ENCODE measurements at regions of chr10 and their contacts with region 1.

Region 1: GRCh38 chr10:68550747-68551411 is 9.3 kb upstream of the TET1 start:
- DNase-seq: peak in 1 of 2 donors; percentile 35
- ATAC-seq: peak; percentile 88 to 89
- H3K4me3 ChIP-seq: no peak overlapping the region
- H3K27ac ChIP-seq: no peak overlapping the region
- H3K4me1 ChIP-seq: no peaks in the 10 kb centered on the region
- H3K27me3 ChIP-seq: no peaks in the 10 kb centered on the region
- CTCF ChIP-seq: peak in 4 of 5 experiments; percentile 50 to 74 (median 62)
- POLR2A ChIP-seq: no peak

Region 2: DNA sequence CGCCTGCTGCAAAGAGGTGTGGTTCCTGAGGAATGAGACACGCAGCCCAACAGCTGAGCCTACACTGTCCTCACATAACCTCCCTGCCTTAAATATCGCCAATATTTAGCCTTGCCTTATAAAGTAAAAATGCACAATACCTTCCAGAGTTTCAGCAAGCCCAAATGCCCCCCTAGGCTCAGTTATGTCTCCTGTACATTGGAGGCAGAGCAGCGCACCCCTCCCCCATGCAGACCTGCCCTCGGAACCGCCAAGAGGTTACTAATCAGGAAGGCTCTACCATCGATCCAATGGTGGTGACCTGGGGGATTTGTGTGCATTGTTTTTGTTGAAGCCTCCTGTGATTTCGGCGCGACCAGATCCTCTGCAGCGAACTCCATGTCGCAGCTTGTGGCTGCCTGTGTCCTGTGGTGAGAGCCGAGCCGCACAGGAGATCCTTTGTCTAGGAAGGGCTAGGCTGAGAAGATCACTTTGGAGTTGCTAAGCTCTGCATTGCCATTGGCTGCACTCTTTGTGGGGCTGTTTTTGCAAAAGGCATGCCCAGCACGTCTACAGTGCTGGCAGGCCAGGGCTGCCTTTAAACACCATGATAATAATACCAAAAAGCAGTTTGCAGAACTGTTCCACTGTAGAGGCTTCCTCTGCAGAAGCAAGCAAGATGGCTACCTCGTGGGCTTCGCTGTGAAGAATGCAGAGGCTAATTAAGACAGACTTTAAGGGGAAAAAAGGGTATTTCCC is 49.3 kb after region 1 on chr10:
- in situ Hi-C with region 1: no loop called
- intact Hi-C with region 1: loop called (anchors 10 kb)
- DNase-seq: peak; percentile 24 to 43
- ATAC-seq: peak; percentile 73 to 83
- H3K4me3 ChIP-seq: peak overlapping the region; percentile 52 to 65 (median 60)
- H3K27ac ChIP-seq: peak overlapping the region; percentile 52 to 79 (median 72)
- H3K4me1 ChIP-seq: peaks cover 17 to 33% of the 10 kb centered on the region in 2 donors
- H3K27me3 ChIP-seq: no peaks in the 10 kb centered on the region
- CTCF ChIP-seq: no peak
- POLR2A ChIP-seq: no peak